Dendritic cell treated with granulocyte-macrophage colony-stimulating factor and Interleukin-4, amounts not matched to agents 40 ng/mL and 50 ng/mL, for 4 days (primary cell): ENCODE measurements at regions of chr11 and their contacts with region 1.

Region 1: GRCh38 chr11:46238967-46239800 is 38.3 kb upstream of the CREB3L1 start:
- H3K4me3 Mint-ChIP-seq: peak overlapping the region; percentile 68
- H3K27ac Mint-ChIP-seq: peak overlapping the region; percentile 82
- H3K4me1 Mint-ChIP-seq: peaks cover 51% of the 10 kb centered on the region
- H3K27me3 Mint-ChIP-seq: peaks cover 3% of the 10 kb centered on the region

Region 2: GRCh38 chr11:46127150-46127638 is 112.0 kb before region 1 on chr11:
- intact Hi-C with region 1: loop called (anchors 5 kb)
- H3K4me3 Mint-ChIP-seq: peak overlapping the region; percentile 9
- H3K27ac Mint-ChIP-seq: peak overlapping the region; percentile 67
- H3K4me1 Mint-ChIP-seq: peaks cover 12% of the 10 kb centered on the region
- H3K27me3 Mint-ChIP-seq: no peaks in the 10 kb centered on the region

Region 3: DNA sequence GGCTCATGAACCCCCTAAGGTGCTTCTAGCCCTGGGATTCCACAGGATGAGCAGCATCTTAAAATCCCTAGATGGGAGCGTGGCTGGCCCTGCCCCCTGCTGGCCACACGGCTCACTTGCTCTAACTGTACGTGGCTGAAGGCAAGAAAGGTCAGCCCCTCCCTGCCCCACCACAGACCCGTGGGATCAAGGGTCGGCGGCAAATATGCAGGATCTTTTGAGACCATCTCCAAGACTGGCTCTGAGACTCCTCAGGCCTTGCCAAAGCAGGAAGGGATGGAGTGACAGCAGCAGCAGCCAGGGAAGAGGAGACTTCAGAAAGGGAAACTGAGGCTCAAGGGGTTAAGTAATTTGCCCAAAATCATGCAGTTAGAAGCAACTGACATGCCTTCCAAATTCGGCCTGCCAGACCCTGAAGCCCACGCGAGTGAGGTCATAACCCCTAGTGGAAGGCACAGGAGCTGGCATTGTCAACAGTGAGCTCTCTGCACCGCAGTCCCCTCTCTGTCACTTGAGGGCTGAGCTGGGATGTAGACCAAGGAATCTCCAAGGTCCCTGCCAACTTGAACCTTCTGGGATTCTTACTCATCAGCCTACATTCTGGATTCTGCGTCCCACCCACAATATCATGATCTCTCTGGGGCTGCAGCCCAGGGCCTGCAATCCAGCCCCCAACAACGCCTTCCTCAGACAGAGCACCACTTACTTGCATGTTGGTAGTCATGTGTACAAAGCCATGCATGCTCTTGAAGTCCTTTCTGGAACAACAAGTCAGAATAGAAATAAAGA is 69.6 kb after region 1 on chr11:
- intact Hi-C with region 1: loop called (anchors 1 kb)
- H3K4me3 Mint-ChIP-seq: no peak overlapping the region
- H3K27ac Mint-ChIP-seq: no peak overlapping the region
- H3K4me1 Mint-ChIP-seq: peaks cover 32% of the 10 kb centered on the region
- H3K27me3 Mint-ChIP-seq: peaks cover 5% of the 10 kb centered on the region